PC-3 (cell line): ENCODE measurements at regions of chr6 and their contacts with region 1.

Region 1: GRCh38 chr6:112087136-112087911 is at the starts of genes FAM229B and TUBE1:
- DNase-seq: peak; percentile 89
- ATAC-seq: peak; percentile 95
- H3K4me3 ChIP-seq: peak within 1 kb of the TSS; percentile 92
- H3K27ac ChIP-seq: no peak within 1 kb of the TSS
- H3K4me1 ChIP-seq: no peaks in the 10 kb centered on the region
- H3K27me3 ChIP-seq: no peaks in the 10 kb centered on the region
- CTCF ChIP-seq: no peak
- total RNA-seq, gene FAM229B: 2.8 and 6.7 TPM in 2 replicates
- total RNA-seq, gene TUBE1: 9.5 and 9.6 TPM in 2 replicates

Region 2: DNA sequence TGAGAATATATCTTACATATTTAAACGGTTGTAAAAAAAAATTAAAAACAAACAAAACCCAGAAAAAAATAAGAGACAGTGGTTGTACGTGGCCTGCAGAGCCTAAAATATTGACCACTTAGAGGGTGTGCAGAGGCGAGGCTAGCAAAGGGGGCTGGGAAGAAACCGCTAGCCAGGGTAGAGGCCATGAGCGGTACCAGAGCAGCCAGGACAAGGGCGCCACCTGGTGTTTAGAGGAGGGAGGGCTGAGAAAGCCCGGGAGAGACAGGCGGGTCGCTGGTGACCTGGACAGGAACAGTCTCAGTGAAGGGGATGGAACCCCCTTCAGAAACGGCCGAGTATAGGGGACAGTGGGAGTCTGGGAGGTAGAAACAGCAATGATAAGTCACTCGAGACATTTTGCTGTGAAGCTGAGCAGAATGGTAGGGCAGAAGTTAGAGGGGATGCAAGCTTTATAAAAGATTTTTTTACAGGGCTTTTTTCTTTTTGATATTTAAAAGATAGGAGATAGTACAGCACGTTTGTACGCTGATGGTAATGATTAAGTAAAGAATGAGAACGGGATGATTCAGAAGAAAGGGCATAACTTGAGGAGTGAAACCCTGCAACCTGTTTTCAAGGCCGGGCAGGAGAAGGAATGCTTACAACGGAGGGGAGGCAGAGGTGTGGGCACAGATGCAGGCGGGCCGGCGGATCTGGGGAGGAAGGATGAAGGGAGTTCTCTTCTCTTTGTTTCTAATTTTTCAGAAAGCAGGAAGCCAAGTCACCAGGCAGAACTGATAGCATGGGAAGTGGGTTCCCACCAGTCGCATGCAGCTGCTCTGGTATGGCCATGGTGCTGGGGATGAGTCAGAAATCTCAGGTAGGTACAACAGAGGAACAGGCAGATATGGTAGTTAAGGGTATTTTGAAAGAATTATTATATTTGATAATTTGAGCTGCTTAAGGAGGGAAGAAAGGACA is 76.3 kb after region 1 on chr6:
- CTCF ChIA-PET with region 1: interaction called, 28 read pairs
- POLR2A ChIA-PET with region 1: interaction called, 3 read pairs
- intact Hi-C with region 1: loop called (anchors 1 kb)
- DNase-seq: peak; percentile 64
- ATAC-seq: peak; percentile 99
- H3K4me3 ChIP-seq: no peak overlapping the region
- H3K27ac ChIP-seq: no peak overlapping the region
- H3K4me1 ChIP-seq: no peaks in the 10 kb centered on the region
- H3K27me3 ChIP-seq: no peaks in the 10 kb centered on the region
- CTCF ChIP-seq: peak; percentile 86